Natural killer cell (primary cell): ENCODE measurements at regions of chr17 and their contacts with region 1.

Region 1: DNA sequence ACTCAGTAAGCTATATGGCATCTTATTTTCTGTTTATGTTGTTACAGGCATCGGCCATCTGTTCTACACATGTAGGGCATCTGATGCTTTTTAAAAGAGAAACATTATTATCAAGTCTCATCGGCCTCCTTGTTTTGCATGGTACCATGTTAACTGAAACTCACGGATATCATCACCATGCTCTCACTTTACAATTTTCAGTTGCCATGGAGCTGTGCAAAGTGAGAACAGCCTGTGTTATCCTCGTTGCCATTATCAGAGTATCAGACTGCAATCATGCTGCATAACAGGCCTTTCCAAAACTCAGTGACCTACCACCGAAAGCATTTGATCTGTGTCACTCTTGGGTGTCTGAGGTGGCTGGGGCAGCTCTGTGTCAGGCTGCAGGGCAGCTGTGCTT is 110.3 kb downstream of the C17orf67 start:
- DNase-seq: no peak
- ATAC-seq: no peak
- H3K4me3 ChIP-seq: no peak overlapping the region
- H3K4me3 Mint-ChIP-seq: no peak overlapping the region
- H3K27ac ChIP-seq: no peak overlapping the region
- H3K27ac Mint-ChIP-seq: no peak overlapping the region
- H3K4me1 ChIP-seq: no peaks in the 10 kb centered on the region
- H3K4me1 Mint-ChIP-seq: no peaks in the 10 kb centered on the region
- H3K27me3 ChIP-seq: no peaks in the 10 kb centered on the region
- H3K27me3 Mint-ChIP-seq: peaks cover 23 to 55% of the 10 kb centered on the region in 2 donors
- CTCF ChIP-seq: no peak

Region 2: GRCh38 chr17:56602292-56603130 is 120.9 kb before region 1 on chr17:
- intact Hi-C with region 1: no loop called
- DNase-seq: peak in 1 of 2 donors; percentile 82
- ATAC-seq: no peak
- H3K4me3 ChIP-seq: no peak overlapping the region
- H3K4me3 Mint-ChIP-seq: no peak overlapping the region
- H3K27ac ChIP-seq: no peak overlapping the region
- H3K27ac Mint-ChIP-seq: no peak overlapping the region
- H3K4me1 ChIP-seq: peaks cover 4% of the 10 kb centered on the region
- H3K4me1 Mint-ChIP-seq: peaks cover 0 to 4% of the 10 kb centered on the region in 2 donors
- H3K27me3 ChIP-seq: peaks cover 16% of the 10 kb centered on the region
- H3K27me3 Mint-ChIP-seq: peaks cover 46 to 80% of the 10 kb centered on the region in 2 donors
- CTCF ChIP-seq: no peak

Region 3: GRCh38 chr17:56674401-56675201 is 48.8 kb before region 1 on chr17:
- intact Hi-C with region 1: loop called (anchors 5 kb)
- DNase-seq: no peak
- ATAC-seq: no peak
- H3K4me3 ChIP-seq: no peak overlapping the region
- H3K4me3 Mint-ChIP-seq: no peak overlapping the region
- H3K27ac ChIP-seq: no peak overlapping the region
- H3K27ac Mint-ChIP-seq: no peak overlapping the region
- H3K4me1 ChIP-seq: peaks cover 23% of the 10 kb centered on the region
- H3K4me1 Mint-ChIP-seq: peaks cover 23 to 24% of the 10 kb centered on the region in 2 donors
- H3K27me3 ChIP-seq: peaks cover 64% of the 10 kb centered on the region
- H3K27me3 Mint-ChIP-seq: peaks cover 49 to 88% of the 10 kb centered on the region in 2 donors
- CTCF ChIP-seq: no peak

Region 4: GRCh38 chr17:56754523-56755208 is 31.2 kb after region 1 on chr17:
- intact Hi-C with region 1: no loop called
- DNase-seq: peak in 1 of 2 donors; percentile 33
- ATAC-seq: no peak
- H3K4me3 ChIP-seq: no peak overlapping the region
- H3K4me3 Mint-ChIP-seq: no peak overlapping the region
- H3K27ac ChIP-seq: no peak overlapping the region
- H3K27ac Mint-ChIP-seq: no peak overlapping the region
- H3K4me1 ChIP-seq: peaks cover 13% of the 10 kb centered on the region
- H3K4me1 Mint-ChIP-seq: peaks cover 4 to 29% of the 10 kb centered on the region in 2 donors
- H3K27me3 ChIP-seq: no peaks in the 10 kb centered on the region
- H3K27me3 Mint-ChIP-seq: peaks cover 17 to 42% of the 10 kb centered on the region in 2 donors
- CTCF ChIP-seq: no peak

Region 5: GRCh38 chr17:56786989-56787482 is 63.6 kb after region 1 on chr17:
- intact Hi-C with region 1: no loop called
- DNase-seq: peak in 1 of 2 donors; percentile 51
- ATAC-seq: peak; percentile 86 to 95 (median 94)
- H3K4me3 ChIP-seq: no peak overlapping the region
- H3K4me3 Mint-ChIP-seq: peak overlapping the region; percentile 49
- H3K27ac ChIP-seq: no peak overlapping the region
- H3K27ac Mint-ChIP-seq: peak overlapping the region; percentile 69 to 80
- H3K4me1 ChIP-seq: peaks cover 10% of the 10 kb centered on the region
- H3K4me1 Mint-ChIP-seq: peaks cover 16 to 17% of the 10 kb centered on the region in 2 donors
- H3K27me3 ChIP-seq: peaks cover 2% of the 10 kb centered on the region
- H3K27me3 Mint-ChIP-seq: peaks cover 18 to 19% of the 10 kb centered on the region in 2 donors
- CTCF ChIP-seq: no peak